CD8-positive, alpha-beta T cell (primary cell): ENCODE measurements at regions of chr2 and their contacts with region 1.

Region 1: DNA sequence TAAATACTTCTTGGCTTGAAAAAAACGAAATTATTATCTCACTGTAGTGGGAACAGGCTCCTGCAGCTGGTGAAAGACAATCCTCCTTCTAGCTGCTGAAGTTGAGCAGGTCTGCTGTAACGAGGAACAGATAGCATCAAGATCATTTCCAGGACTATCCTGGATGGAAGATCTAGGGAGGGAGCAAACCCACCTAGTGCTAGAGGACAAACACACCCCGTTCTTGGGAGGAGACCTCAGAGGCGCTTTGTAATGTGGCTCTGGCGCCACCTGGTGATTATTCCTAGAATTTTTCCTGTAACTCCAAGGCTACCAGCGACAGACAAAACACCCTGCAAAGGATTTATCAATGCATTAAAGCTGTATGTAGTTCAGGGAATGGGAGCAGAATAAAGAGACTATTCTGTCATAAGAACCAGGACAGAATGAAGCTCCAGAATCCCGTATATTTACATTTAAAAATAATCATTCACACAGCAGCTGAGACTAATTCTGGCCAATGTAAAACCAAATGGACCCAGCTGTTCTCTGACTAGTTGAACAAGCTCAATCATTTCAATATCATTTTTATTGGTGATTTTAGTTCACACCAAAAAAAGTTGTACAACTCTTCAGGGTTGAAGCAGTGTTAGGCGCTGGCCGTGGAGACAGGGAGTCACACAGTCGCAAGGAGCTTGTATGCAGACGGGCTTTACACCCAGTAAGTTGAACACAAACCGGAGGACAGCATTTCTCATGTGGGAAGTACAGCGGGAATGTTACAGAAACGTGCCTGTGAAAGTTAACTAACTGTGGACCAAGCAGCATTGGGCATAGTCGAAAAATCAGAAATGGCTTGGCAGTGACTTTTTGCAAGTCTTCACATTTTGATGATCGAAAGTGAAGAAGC is 290.3 kb downstream of the TRIB2 start:
- DNase-seq: peak; percentile 27 to 77 (median 64)
- ATAC-seq: peak; percentile 56
- H3K4me3 ChIP-seq: no peak overlapping the region
- H3K4me3 Mint-ChIP-seq: no peak overlapping the region
- H3K27ac ChIP-seq: no peak overlapping the region
- H3K27ac Mint-ChIP-seq: no peak overlapping the region
- H3K4me1 ChIP-seq: no peaks in the 10 kb centered on the region
- H3K4me1 Mint-ChIP-seq: peaks cover 2% of the 10 kb centered on the region
- H3K27me3 ChIP-seq: no peaks in the 10 kb centered on the region
- H3K27me3 Mint-ChIP-seq: peaks cover 19% of the 10 kb centered on the region
- CTCF ChIP-seq: peak; percentile 95

Region 2: GRCh38 chr2:11778923-11779757 is 1227.9 kb before region 1 on chr2:
- CTCF ChIA-PET with region 1: interaction called, 20 read pairs
- POLR2A ChIA-PET with region 1: no interaction called
- intact Hi-C with region 1: loop called in 1 of 2 experiments (anchors 2 kb)
- DNase-seq: peak; percentile 70 to 93 (median 88)
- ATAC-seq: peak; percentile 96
- H3K4me3 ChIP-seq: peak overlapping the region in 1 of 2 experiments; percentile 24
- H3K4me3 Mint-ChIP-seq: peak overlapping the region; percentile 23
- H3K27ac ChIP-seq: peak overlapping the region in 1 of 2 experiments; percentile 40
- H3K27ac Mint-ChIP-seq: peak overlapping the region; percentile 6
- H3K4me1 ChIP-seq: peaks cover 21% of the 10 kb centered on the region
- H3K4me1 Mint-ChIP-seq: peaks cover 37% of the 10 kb centered on the region
- H3K27me3 ChIP-seq: no peaks in the 10 kb centered on the region
- H3K27me3 Mint-ChIP-seq: no peaks in the 10 kb centered on the region
- CTCF ChIP-seq: peak; percentile 93

Region 3: DNA sequence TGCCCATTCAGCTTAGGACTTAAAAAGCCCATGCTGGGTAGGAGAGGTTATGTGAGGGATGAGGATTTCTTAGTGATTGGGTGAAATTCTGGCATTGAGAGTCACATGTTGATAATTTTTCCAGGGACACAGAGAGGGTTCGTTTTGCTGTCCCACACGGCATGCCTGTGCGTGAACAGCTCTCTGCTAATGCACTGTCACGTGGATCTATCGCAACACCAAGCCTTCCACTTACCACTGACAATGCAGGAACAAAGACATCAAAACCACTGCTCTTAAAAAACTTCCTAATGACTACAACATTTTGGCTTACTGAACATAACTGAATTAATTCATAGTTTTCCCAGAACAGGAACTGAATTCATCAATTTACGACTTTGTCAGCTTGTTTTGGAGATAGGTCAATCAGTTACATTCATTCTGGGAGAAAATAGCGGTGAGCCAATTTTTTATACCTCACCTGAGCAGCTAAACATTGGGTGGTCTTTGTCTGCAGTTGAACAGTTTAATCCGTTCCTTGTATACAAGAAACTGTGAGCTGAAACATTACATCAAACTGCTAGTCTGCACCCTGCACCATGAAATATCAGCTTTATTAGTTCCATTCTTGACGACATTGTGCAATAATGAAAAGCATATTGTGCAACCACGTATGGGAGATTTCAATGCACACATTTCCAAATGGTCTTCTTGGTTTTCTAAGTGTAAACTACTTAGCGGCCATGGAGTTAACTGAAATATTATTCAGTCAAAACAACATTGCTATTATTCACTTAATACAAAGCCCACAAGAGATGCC is 1133.5 kb before region 1 on chr2:
- CTCF ChIA-PET with region 1: interaction called, 10 read pairs
- POLR2A ChIA-PET with region 1: no interaction called
- intact Hi-C with region 1: no loop called
- DNase-seq: peak in 1 of 9 experiments; percentile 11
- ATAC-seq: no peak
- H3K4me3 ChIP-seq: no peak overlapping the region
- H3K4me3 Mint-ChIP-seq: no peak overlapping the region
- H3K27ac ChIP-seq: no peak overlapping the region
- H3K27ac Mint-ChIP-seq: no peak overlapping the region
- H3K4me1 ChIP-seq: no peaks in the 10 kb centered on the region
- H3K4me1 Mint-ChIP-seq: peaks cover 6% of the 10 kb centered on the region
- H3K27me3 ChIP-seq: peaks cover 0 to 3% of the 10 kb centered on the region in 2 experiments
- H3K27me3 Mint-ChIP-seq: no peaks in the 10 kb centered on the region
- CTCF ChIP-seq: no peak

Region 4: GRCh38 chr2:12430407-12431133 is 576.5 kb before region 1 on chr2:
- CTCF ChIA-PET with region 1: interaction called, 9 read pairs
- POLR2A ChIA-PET with region 1: no interaction called
- intact Hi-C with region 1: loop called in 1 of 2 experiments (anchors 5 kb)
- DNase-seq: peak in 2 of 9 experiments; percentile 11 to 45
- ATAC-seq: peak; percentile 40
- H3K4me3 ChIP-seq: peak overlapping the region in 1 of 2 experiments; percentile 32
- H3K4me3 Mint-ChIP-seq: peak overlapping the region; percentile 77
- H3K27ac ChIP-seq: peak overlapping the region in 1 of 2 experiments; percentile 17
- H3K27ac Mint-ChIP-seq: peak overlapping the region; percentile 71
- H3K4me1 ChIP-seq: no peaks in the 10 kb centered on the region
- H3K4me1 Mint-ChIP-seq: peaks cover 20% of the 10 kb centered on the region
- H3K27me3 ChIP-seq: no peaks in the 10 kb centered on the region
- H3K27me3 Mint-ChIP-seq: no peaks in the 10 kb centered on the region
- CTCF ChIP-seq: no peak

Region 5: DNA sequence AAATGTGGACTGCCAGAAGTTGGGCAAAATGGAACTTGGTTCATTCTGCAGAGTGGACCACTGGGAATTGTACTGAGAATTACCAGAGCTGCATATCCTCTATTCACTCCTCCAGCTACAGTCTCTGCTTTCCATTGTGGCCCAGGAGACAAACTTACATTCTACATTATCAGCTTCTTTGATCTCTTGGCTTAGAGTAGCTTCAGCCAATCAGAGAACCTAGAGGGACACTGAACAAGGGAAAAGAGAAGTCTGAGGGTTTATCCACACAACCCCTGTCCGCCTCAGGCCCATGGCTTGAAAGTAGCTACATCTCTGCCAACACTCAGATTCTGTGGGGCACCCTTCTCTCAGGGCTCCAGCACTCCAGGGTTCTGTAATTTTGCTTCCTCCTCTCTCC is 39.3 kb before region 1 on chr2:
- CTCF ChIA-PET with region 1: interaction called, 13 read pairs
- POLR2A ChIA-PET with region 1: no interaction called
- intact Hi-C with region 1: no loop called
- DNase-seq: no peak
- ATAC-seq: no peak
- H3K4me3 ChIP-seq: no peak overlapping the region
- H3K4me3 Mint-ChIP-seq: no peak overlapping the region
- H3K27ac ChIP-seq: no peak overlapping the region
- H3K27ac Mint-ChIP-seq: no peak overlapping the region
- H3K4me1 ChIP-seq: peaks cover 17% of the 10 kb centered on the region
- H3K4me1 Mint-ChIP-seq: peaks cover 18% of the 10 kb centered on the region
- H3K27me3 ChIP-seq: no peaks in the 10 kb centered on the region
- H3K27me3 Mint-ChIP-seq: peaks cover 12% of the 10 kb centered on the region
- CTCF ChIP-seq: no peak

Region 6: DNA sequence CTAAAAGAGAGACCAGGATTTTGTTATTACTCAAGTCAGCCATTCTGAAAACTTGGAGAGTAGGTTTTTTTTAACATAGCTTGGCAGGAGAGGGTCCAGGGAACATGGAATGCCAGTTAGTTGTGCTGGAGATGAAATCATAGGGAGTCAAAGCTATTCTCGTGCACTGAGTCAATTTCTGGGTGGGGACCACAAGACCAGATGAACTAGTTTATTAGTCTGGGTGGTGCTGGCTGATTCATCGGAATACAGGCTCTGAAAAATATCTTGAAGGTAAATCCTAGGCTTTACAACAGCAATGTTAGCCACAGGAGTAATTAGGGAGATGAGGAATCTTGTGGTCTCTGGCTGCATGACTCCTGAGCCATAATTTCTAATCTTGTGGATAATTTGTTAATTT is 631.1 kb after region 1 on chr2:
- CTCF ChIA-PET with region 1: no interaction called
- POLR2A ChIA-PET with region 1: no interaction called
- intact Hi-C with region 1: no loop called
- DNase-seq: no peak
- ATAC-seq: no peak
- H3K4me3 ChIP-seq: no peak overlapping the region
- H3K4me3 Mint-ChIP-seq: no peak overlapping the region
- H3K27ac ChIP-seq: no peak overlapping the region
- H3K27ac Mint-ChIP-seq: no peak overlapping the region
- H3K4me1 ChIP-seq: no peaks in the 10 kb centered on the region
- H3K4me1 Mint-ChIP-seq: no peaks in the 10 kb centered on the region
- H3K27me3 ChIP-seq: no peaks in the 10 kb centered on the region
- H3K27me3 Mint-ChIP-seq: no peaks in the 10 kb centered on the region
- CTCF ChIP-seq: no peak